Endothelial cell of umbilical vein (primary cell): ENCODE measurements at regions of chr9 and their contacts with region 1.

Region 1: DNA sequence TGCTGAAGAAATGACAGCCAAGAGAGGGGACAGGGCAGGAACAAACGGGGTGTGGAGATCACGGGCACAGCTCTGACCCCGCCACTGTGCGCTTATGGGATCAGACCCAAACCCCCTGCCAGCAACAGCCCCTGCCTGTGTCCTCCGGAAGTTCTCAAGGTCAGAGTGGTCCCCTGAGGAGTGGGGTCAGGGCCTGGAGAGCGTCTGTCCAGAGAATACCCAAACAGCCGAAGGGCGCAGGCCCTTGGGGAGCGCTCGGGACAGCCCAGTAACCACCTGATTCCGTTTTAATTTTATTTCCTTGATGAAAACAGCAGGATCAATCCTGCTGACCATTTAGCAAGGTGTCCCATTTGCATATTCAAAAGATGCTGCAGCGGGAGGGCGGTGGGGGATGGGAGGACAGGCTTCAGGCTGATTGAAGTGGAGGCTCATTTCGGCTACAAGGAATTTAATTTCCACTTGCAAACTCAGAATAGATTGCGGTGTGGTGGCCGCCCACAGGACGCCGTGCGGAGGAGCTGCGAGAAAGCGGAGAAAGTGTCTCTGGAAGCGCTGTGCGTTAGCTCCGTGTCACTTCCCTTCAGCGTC is 32.6 kb upstream of the TMEM250 start:
- DNase-seq: no peak
- H3K4me3 ChIP-seq: no peak overlapping the region
- H3K27ac ChIP-seq: no peak overlapping the region
- H3K4me1 ChIP-seq: no peaks in the 10 kb centered on the region
- H3K27me3 ChIP-seq: peaks cover 0 to 3% of the 10 kb centered on the region in 2 experiments
- CTCF ChIP-seq: no peak
- POLR2A ChIP-seq: no peak

Region 2: GRCh38 chr9:135971892-135972291 is 179.4 kb before region 1 on chr9:
- CTCF ChIA-PET with region 1: no interaction called
- POLR2A ChIA-PET with region 1: no interaction called
- dilution Hi-C with region 1: no loop called
- intact Hi-C with region 1: no loop called
- DNase-seq: no peak
- H3K4me3 ChIP-seq: no peak overlapping the region
- H3K27ac ChIP-seq: no peak overlapping the region
- H3K4me1 ChIP-seq: peaks cover 22% of the 10 kb centered on the region
- H3K27me3 ChIP-seq: no peaks in the 10 kb centered on the region
- CTCF ChIP-seq: no peak
- POLR2A ChIP-seq: no peak

Region 3: DNA sequence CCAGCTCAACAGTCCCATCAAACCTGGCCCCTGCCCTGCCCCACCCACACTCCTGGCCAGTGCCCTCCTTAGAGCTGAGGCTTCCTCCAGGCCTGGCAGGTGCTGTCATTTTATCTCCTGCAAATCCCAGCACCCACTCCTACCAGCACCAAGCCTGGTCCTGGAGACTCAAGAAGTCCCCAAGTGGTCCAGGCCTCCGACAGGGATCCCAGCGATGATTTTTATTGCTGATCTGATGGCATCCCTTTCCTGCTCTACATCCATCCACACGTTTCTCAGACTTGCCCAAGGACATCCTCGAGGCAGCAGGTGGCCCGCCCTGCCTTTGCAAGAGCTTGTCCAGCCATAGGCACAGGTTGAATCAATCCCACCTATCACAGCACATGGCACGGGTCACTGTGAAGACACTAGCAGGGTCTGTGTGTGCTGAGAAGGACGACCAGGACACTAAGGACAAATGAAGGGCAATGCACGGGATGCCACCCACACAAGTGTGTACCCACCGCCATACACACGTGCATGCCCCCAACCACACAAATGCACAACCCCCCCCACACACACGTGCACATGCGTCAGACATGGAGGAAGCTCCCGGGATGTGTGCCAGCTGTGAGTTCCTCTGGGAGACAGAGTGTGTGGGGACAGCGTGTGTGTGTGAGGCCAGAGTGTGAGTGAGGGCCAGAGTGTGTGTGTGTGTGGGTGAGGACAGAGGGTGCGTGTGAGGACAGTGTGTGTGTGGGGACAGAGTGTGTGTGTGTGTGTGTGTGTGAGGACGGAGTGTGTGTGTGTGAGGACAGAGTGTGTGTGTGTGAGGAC is 127.7 kb before region 1 on chr9:
- CTCF ChIA-PET with region 1: no interaction called
- POLR2A ChIA-PET with region 1: no interaction called
- dilution Hi-C with region 1: no loop called
- intact Hi-C with region 1: no loop called
- DNase-seq: peak; percentile 43
- H3K4me3 ChIP-seq: no peak overlapping the region
- H3K27ac ChIP-seq: no peak overlapping the region
- H3K4me1 ChIP-seq: no peaks in the 10 kb centered on the region
- H3K27me3 ChIP-seq: no peaks in the 10 kb centered on the region
- CTCF ChIP-seq: no peak
- POLR2A ChIP-seq: no peak

Region 4: DNA sequence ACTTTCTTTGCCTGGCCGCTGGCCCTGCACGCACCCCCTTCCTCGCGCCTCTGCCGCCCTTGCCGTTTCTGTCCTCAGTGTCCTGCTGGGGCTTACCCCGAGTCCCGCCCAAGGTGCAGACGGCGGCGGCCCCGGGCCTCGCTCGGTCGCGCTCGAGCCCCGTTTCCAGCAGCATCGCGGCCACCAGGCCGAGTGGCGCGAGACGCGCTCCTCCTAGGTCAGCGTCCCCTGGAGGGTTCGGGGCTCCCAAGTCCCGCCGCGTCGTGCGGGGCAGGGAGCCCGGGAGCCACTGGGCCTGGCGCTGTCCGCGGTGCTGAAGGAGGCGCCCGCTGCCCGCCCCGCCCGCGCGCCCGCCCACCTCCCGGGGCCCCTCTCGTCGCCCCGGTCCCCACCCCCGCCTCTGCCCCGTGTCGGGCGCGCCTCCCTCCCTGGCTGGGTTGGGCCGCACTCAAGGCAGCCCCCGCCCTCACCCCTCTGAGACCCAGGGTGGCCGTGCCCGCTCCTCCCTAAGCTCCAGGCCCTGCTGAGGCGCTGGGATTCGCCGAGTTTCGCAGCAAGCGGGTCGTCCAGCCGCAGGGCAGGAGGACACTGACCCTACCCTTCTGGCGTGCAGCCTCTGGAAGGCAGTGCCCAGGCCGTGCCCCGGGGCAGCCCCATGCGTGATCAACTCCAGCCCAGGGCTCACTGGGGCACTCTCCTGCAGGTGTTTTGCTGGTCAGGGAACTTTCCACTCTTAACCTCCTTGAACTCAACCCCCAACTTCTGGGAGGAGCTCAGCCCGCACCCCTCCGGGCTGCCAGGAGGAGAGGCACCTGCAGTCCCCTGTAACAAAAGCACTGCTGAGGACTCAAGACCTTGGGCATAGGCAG is 53.8 kb after region 1 on chr9 and contains the start of gene LHX3:
- CTCF ChIA-PET with region 1: no interaction called
- POLR2A ChIA-PET with region 1: no interaction called
- dilution Hi-C with region 1: no loop called
- intact Hi-C with region 1: loop called (anchors 10 kb)
- DNase-seq: peak; percentile 9
- H3K4me3 ChIP-seq: no peak within 1 kb of the TSS
- H3K27ac ChIP-seq: no peak within 1 kb of the TSS
- H3K4me1 ChIP-seq: no peaks in the 10 kb centered on the region
- H3K27me3 ChIP-seq: peaks cover 34 to 46% of the 10 kb centered on the region in 2 experiments
- CTCF ChIP-seq: no peak
- POLR2A ChIP-seq: no peak
- total RNA-seq, gene LHX3: not detected in 2 replicates

Region 5: DNA sequence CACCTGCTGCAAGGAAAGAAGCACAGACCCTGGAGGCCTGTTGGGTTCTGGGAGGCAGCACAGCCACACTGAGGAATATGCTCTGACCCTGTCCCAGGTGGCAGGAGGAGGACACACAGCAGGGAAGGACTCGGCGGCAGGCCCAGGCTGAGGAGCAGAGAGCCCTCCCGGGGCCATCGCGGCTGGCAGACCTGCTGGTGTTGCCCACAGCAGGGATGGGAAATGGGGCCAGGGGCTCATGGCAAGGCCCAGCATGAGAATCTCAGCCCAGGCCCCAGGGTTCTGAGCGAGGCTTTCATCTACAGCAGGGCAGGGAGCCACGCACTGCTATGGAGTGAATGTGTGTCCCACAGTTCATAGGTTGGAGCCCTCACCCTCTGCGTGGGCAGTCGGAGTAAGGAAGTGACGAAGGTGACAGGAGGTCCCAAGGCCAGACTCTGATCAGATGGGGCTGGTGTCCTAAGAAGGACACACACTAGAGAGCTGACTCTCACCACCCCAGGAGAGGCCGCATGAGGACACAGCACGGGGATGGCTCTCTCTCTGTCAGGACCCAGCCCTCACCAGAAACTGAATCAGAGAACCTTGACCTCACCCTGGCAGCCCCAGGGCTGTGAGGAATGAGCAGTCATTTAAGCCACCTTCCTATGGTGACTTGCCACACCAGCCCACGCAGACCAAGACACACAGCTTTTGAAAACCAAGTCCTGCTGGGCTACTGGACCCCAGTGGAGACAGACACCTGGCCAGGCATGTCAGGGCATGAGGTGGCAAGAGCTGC is 165.8 kb after region 1 on chr9:
- CTCF ChIA-PET with region 1: no interaction called
- POLR2A ChIA-PET with region 1: no interaction called
- dilution Hi-C with region 1: no loop called
- intact Hi-C with region 1: no loop called
- DNase-seq: no peak
- H3K4me3 ChIP-seq: no peak overlapping the region
- H3K27ac ChIP-seq: no peak overlapping the region
- H3K4me1 ChIP-seq: no peaks in the 10 kb centered on the region
- H3K27me3 ChIP-seq: no peaks in the 10 kb centered on the region
- CTCF ChIP-seq: no peak
- POLR2A ChIP-seq: no peak